Panc1 (cell line): ENCODE measurements at regions of chr3 and their contacts with region 1.

Region 1: GRCh38 chr3:170383567-170383966 is 26.1 kb downstream of the SKIL start:
- DNase-seq: no peak
- ATAC-seq: no peak; the same call in 1 of the 2 replicates
- H3K4me3 ChIP-seq: no peak overlapping the region
- H3K27ac ChIP-seq: no peak overlapping the region
- H3K4me1 ChIP-seq: no peaks in the 10 kb centered on the region
- H3K27me3 ChIP-seq: no peaks in the 10 kb centered on the region
- CTCF ChIP-seq: no peak

Region 2: GRCh38 chr3:170368921-170369320 is 14.6 kb before region 1 on chr3:
- CTCF ChIA-PET with region 1: no interaction called
- POLR2A ChIA-PET with region 1: no interaction called
- in situ Hi-C with region 1: no loop called
- intact Hi-C with region 1: no loop called
- DNase-seq: no peak
- ATAC-seq: no peak
- H3K4me3 ChIP-seq: no peak overlapping the region
- H3K27ac ChIP-seq: no peak overlapping the region
- H3K4me1 ChIP-seq: no peaks in the 10 kb centered on the region
- H3K27me3 ChIP-seq: no peaks in the 10 kb centered on the region
- CTCF ChIP-seq: no peak; the same call in 1 of the 2 replicates

Region 3: GRCh38 chr3:170397579-170398177 is 14.1 kb after region 1 on chr3:
- CTCF ChIA-PET with region 1: no interaction called
- POLR2A ChIA-PET with region 1: interaction called, 10 read pairs
- in situ Hi-C with region 1: no loop called
- intact Hi-C with region 1: no loop called
- DNase-seq: no peak
- ATAC-seq: no peak; the same call in 1 of the 2 replicates
- H3K4me3 ChIP-seq: no peak overlapping the region
- H3K27ac ChIP-seq: no peak overlapping the region
- H3K4me1 ChIP-seq: no peaks in the 10 kb centered on the region
- H3K27me3 ChIP-seq: no peaks in the 10 kb centered on the region
- CTCF ChIP-seq: no peak